ENCODE measurements at regions of chr16 and their contacts with region 1.

Region 1: GRCh38 chr16:58629572-58630104 is at the start of gene CNOT1:
- DNase-seq: no peak
- ATAC-seq: peak; percentile 80
- H3K4me3 ChIP-seq: peak within 1 kb of the TSS; percentile 54 to 100 (median 100)
- H3K4me3 Mint-ChIP-seq: peak within 1 kb of the TSS; percentile 93
- H3K27ac ChIP-seq: peak within 1 kb of the TSS; percentile 99 to 100
- H3K27ac Mint-ChIP-seq: peak within 1 kb of the TSS; percentile 97
- H3K4me1 ChIP-seq: peaks cover 19 to 26% of the 10 kb centered on the region in 2 donors
- H3K4me1 Mint-ChIP-seq: peaks cover 40% of the 10 kb centered on the region
- H3K27me3 ChIP-seq: no peaks in the 10 kb centered on the region
- H3K27me3 Mint-ChIP-seq: no peaks in the 10 kb centered on the region
- CTCF ChIP-seq: no peak
- total RNA-seq, gene CNOT1: 246 and 268 TPM in 2 replicates

Region 2: DNA sequence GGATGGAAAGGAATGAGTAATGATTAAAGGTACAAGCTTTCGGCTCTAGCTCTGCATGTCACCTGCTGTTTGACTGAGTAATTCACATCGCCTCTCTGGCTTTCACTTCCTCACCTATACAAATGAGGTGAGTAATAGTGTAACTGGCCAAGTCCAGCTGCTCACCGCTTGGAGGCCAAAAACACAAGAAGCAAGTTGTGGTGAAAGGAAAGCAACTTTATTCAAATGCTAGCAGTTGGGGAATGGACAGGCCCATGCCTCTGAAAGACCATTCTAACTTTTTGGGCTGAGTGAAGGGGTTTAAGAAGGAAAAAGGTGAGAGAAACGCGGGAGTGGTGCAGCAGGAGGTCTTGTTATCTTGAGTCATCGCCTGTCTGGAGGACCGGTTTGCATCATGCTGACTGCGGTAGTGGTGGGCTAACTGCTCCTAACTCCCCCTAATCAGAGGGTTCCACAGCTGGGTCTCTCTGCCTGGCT is 386.1 kb before region 1 on chr16:
- CTCF ChIA-PET with region 1: no interaction called
- POLR2A ChIA-PET with region 1: no interaction called
- intact Hi-C with region 1: loop called (anchors 1 kb)
- DNase-seq: peak; percentile 80
- ATAC-seq: peak; percentile 95
- H3K4me3 ChIP-seq: no peak overlapping the region
- H3K4me3 Mint-ChIP-seq: peak overlapping the region; percentile 64
- H3K27ac ChIP-seq: peak overlapping the region in 1 of 2 donors; percentile 5
- H3K27ac Mint-ChIP-seq: peak overlapping the region; percentile 87
- H3K4me1 ChIP-seq: peaks cover 12 to 17% of the 10 kb centered on the region in 2 donors
- H3K4me1 Mint-ChIP-seq: peaks cover 24% of the 10 kb centered on the region
- H3K27me3 ChIP-seq: no peaks in the 10 kb centered on the region
- H3K27me3 Mint-ChIP-seq: peaks cover 11% of the 10 kb centered on the region
- CTCF ChIP-seq: peak; percentile 22

Region 3: GRCh38 chr16:58684354-58685083 is 54.9 kb after region 1 on chr16 and contains the start of gene SLC38A7:
- CTCF ChIA-PET with region 1: no interaction called
- POLR2A ChIA-PET with region 1: no interaction called
- intact Hi-C with region 1: loop called (anchors 1 kb)
- DNase-seq: peak; percentile 81
- ATAC-seq: peak; percentile 89
- H3K4me3 ChIP-seq: peak within 1 kb of the TSS; percentile 30 to 98 (median 74)
- H3K4me3 Mint-ChIP-seq: peak within 1 kb of the TSS; percentile 93
- H3K27ac ChIP-seq: peak within 1 kb of the TSS; percentile 11 to 80
- H3K27ac Mint-ChIP-seq: peak within 1 kb of the TSS; percentile 80
- H3K4me1 ChIP-seq: peaks cover 10 to 17% of the 10 kb centered on the region in 2 donors
- H3K4me1 Mint-ChIP-seq: peaks cover 17% of the 10 kb centered on the region
- H3K27me3 ChIP-seq: no peaks in the 10 kb centered on the region
- H3K27me3 Mint-ChIP-seq: peaks cover 1% of the 10 kb centered on the region
- CTCF ChIP-seq: no peak
- total RNA-seq, gene SLC38A7: 18.0 and 23.9 TPM in 2 replicates

Measured in B cell (primary cell).